Caco-2 (cell line): ENCODE measurements at regions of chr14 and their contacts with region 1.

Region 1: DNA sequence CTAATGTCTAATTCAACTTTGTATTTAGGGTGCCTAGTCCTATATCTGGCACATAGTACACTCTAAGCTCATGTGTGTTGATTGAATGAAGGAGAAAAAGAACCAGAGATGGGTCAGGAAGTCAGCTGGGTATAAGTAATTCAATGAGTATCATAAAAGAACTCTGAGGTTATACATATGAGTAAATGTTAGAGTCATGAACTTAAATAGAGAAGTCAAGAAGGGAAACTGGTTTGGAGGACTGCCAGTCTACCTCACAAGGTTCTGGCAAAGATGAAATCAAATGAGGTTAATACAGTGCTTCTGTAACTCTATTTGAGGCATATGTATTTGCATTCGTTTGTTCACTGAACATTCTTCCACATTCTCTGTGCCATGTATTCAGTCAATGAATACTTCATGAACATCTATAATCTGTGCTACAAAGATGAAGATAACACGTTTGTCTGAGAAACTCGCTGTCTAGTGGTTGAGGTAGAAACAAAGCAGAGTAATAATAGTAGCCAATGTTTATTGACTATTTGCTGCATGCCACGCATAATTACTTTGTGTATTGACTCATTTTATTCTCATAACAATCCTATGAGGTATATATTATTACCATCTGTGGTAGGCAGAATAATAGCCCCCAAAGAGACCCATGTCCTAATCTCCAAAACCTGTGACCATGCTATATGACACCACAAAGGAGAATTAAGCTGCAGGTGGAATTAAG is 88.9 kb downstream of the PTGER2 start:
- DNase-seq: no peak
- H3K4me3 ChIP-seq: no peak overlapping the region
- H3K4me3 Mint-ChIP-seq: no peak overlapping the region
- H3K27ac Mint-ChIP-seq: no peak overlapping the region
- H3K4me1 ChIP-seq: no peaks in the 10 kb centered on the region
- H3K4me1 Mint-ChIP-seq: no peaks in the 10 kb centered on the region
- H3K27me3 ChIP-seq: no peaks in the 10 kb centered on the region
- H3K27me3 Mint-ChIP-seq: peaks cover 12% of the 10 kb centered on the region
- CTCF ChIP-seq: no peak

Region 2: GRCh38 chr14:52131640-52132320 is 271.2 kb before region 1 on chr14:
- CTCF ChIA-PET with region 1: no interaction called
- POLR2A ChIA-PET with region 1: no interaction called
- intact Hi-C with region 1: no loop called
- DNase-seq: peak; percentile 85 to 89
- H3K4me3 ChIP-seq: no peak overlapping the region
- H3K4me3 Mint-ChIP-seq: no peak overlapping the region
- H3K27ac Mint-ChIP-seq: no peak overlapping the region
- H3K4me1 ChIP-seq: no peaks in the 10 kb centered on the region
- H3K4me1 Mint-ChIP-seq: no peaks in the 10 kb centered on the region
- H3K27me3 ChIP-seq: no peaks in the 10 kb centered on the region
- H3K27me3 Mint-ChIP-seq: no peaks in the 10 kb centered on the region
- CTCF ChIP-seq: peak; percentile 76 to 80

Region 3: DNA sequence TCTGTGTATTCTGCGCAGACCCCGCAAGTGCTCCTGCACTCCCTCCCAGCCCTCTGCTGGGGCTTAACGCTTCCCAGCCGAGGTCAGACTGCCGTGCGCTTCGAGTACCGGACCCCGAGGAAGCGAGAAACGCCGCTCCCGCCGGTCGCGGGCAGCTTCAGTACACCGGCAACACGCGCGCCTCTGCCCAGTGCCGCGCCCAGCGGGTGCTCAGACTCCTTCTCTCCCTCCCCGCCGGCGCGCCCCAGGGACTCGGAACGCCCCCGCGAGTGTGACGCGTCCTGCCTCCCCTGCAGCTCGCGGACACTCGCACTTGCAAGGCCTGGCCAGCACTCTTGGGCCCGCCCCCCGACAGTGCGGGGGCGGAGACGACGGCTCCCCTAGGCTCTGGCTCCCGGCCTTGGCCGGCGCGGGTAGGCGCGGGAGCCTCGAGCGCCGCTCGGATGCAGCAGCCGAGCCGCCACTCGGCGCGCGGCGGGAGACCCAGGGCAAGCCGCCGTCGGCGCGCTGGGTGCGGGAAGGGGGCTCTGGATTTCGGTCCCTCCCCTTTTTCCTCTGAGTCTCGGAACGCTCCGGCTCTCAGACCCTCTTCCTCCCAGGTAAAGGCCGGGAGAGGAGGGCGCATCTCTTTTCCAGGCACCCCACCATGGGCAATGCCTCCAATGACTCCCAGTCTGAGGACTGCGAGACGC is 88.9 kb before region 1 on chr14 and contains the start of gene PTGER2:
- CTCF ChIA-PET with region 1: no interaction called
- POLR2A ChIA-PET with region 1: no interaction called
- intact Hi-C with region 1: loop called (anchors 10 kb)
- DNase-seq: peak; percentile 73 to 74
- H3K4me3 ChIP-seq: peak within 1 kb of the TSS; percentile 46
- H3K4me3 Mint-ChIP-seq: peak within 1 kb of the TSS; percentile 95
- H3K27ac Mint-ChIP-seq: peak within 1 kb of the TSS; percentile 69
- H3K4me1 ChIP-seq: no peaks in the 10 kb centered on the region
- H3K4me1 Mint-ChIP-seq: peaks cover 16% of the 10 kb centered on the region
- H3K27me3 ChIP-seq: no peaks in the 10 kb centered on the region; the same call in 1 of the 2 replicates
- H3K27me3 Mint-ChIP-seq: peaks cover 28% of the 10 kb centered on the region
- CTCF ChIP-seq: no peak
- total RNA-seq, gene PTGER2: 0.27 and 0.39 TPM in 2 replicates

Region 4: GRCh38 chr14:52422650-52423356 is 19.8 kb after region 1 on chr14:
- CTCF ChIA-PET with region 1: no interaction called
- POLR2A ChIA-PET with region 1: no interaction called
- intact Hi-C with region 1: no loop called
- DNase-seq: no peak
- H3K4me3 ChIP-seq: no peak overlapping the region
- H3K4me3 Mint-ChIP-seq: no peak overlapping the region
- H3K27ac Mint-ChIP-seq: no peak overlapping the region
- H3K4me1 ChIP-seq: no peaks in the 10 kb centered on the region
- H3K4me1 Mint-ChIP-seq: no peaks in the 10 kb centered on the region
- H3K27me3 ChIP-seq: no peaks in the 10 kb centered on the region
- H3K27me3 Mint-ChIP-seq: peaks cover 7% of the 10 kb centered on the region
- CTCF ChIP-seq: no peak

Region 5: DNA sequence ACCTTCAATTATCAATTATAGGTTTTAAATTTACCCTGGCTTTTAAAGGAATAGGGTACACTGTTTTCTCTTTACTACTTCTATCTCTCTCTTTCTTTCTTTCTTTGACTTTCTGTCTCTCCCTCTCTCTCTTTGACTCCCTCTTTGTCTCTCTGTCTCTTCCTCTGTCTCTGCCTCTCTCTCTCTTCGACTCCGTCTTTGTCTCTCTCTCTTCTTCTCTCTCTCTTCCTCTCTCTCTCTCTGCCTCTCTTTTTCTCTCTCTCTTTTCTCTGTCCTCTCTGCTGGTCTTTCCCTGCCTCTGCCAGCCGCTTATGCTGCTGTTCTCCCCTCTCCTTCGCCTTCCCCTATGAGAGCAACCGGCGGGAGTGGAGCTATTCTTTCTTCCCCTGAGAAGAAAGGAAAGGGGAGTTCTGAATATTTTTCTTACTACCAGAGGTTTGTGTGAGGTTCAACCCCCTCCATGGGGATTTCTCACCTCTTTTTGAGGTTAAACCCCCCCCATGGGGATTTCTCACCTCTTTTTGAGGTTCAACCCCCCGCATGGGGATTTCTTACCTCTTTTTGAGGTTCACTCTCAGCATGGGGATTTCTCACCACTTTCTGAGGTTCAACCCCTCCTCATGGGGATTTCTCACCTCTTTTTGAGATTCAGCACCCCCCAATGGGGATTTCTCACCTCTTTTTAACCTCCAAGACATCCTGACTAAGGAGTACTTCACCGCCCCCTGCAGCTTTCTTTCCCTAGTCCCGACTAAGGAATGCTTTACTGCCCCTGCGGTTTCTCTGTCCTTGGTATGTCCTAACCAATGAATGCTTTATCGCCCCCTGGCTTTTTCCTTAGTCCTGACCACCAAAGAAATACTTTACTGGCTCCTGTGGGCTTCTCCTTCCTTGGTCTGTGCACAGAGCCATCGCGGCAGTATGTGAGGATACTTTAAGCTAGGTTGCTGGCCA is 777.6 kb after region 1 on chr14:
- CTCF ChIA-PET with region 1: no interaction called
- POLR2A ChIA-PET with region 1: no interaction called
- intact Hi-C with region 1: no loop called
- DNase-seq: peak; percentile 39
- H3K4me3 ChIP-seq: no peak overlapping the region
- H3K4me3 Mint-ChIP-seq: no peak overlapping the region
- H3K27ac Mint-ChIP-seq: no peak overlapping the region
- H3K4me1 ChIP-seq: no peaks in the 10 kb centered on the region
- H3K4me1 Mint-ChIP-seq: no peaks in the 10 kb centered on the region
- H3K27me3 ChIP-seq: no peaks in the 10 kb centered on the region; the same call in 1 of the 2 replicates
- H3K27me3 Mint-ChIP-seq: peaks cover 16% of the 10 kb centered on the region
- CTCF ChIP-seq: peak; percentile 23 to 31